Activated T-helper 1 cell treated with anti-CD3 and anti-CD28 coated beads, Interleukin-12 subunit alpha, Interleukin-12 subunit beta, Interleukin-2, Interleukin-4 antibody, amounts not matched to agents 30 ng/mL and 10 ng/mL and 1 ng/mL, durations not matched to agents 14 hours and 24 hours and 36 hours (primary cell): ENCODE measurements at regions of chr19 and their contacts with region 1.

Region 1: GRCh38 chr19:36114763-36115452 is at the start of gene POLR2I:
- DNase-seq: peak; percentile 98
- H3K4me3 Mint-ChIP-seq: peak within 1 kb of the TSS; percentile 98
- H3K27ac Mint-ChIP-seq: peak within 1 kb of the TSS; percentile 92
- H3K4me1 Mint-ChIP-seq: peaks cover 38% of the 10 kb centered on the region
- H3K27me3 Mint-ChIP-seq: peaks cover 1% of the 10 kb centered on the region
- total RNA-seq, gene POLR2I: 76.3 and 92.4 TPM in 2 replicates

Region 2: GRCh38 chr19:36014029-36014924 is 100.6 kb before region 1 on chr19 and contains the start of gene ALKBH6:
- intact Hi-C with region 1: loop called (anchors 1 kb)
- DNase-seq: peak; percentile 100
- H3K4me3 Mint-ChIP-seq: peak within 1 kb of the TSS; percentile 98
- H3K27ac Mint-ChIP-seq: peak within 1 kb of the TSS; percentile 96
- H3K4me1 Mint-ChIP-seq: peaks cover 46% of the 10 kb centered on the region
- H3K27me3 Mint-ChIP-seq: no peaks in the 10 kb centered on the region
- total RNA-seq, gene ALKBH6: 48.3 and 60.6 TPM in 2 replicates

Region 3: DNA sequence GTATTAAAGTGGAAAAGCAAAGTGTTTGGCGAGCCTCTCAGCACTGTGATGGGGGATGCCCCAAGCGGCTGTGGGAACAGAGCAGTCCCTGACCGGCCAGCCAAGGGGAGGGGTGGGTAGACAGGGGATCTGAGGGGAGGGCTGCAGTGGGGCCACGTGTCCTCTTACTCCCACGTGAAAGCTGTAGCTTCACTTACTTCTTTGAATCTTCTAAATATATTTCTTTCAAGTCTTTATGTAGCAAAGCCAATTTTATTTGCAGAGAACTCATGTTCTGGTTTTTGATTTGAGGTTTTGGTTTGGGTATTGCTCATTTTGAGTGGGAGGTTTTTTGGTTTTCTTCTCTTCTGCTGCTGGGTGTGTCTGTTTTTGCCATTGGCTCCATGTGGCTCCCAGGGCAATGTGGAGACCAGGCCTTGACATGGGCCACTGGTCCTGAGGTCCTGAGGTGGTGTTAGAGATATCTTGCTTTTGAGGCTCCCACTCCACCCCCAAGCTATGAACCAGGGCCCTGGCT is 21.7 kb before region 1 on chr19:
- intact Hi-C with region 1: loop called (anchors 1 kb)
- DNase-seq: no peak
- H3K4me3 Mint-ChIP-seq: no peak overlapping the region
- H3K27ac Mint-ChIP-seq: peak overlapping the region; percentile 78
- H3K4me1 Mint-ChIP-seq: peaks cover 15% of the 10 kb centered on the region
- H3K27me3 Mint-ChIP-seq: no peaks in the 10 kb centered on the region

Region 4: GRCh38 chr19:36139473-36140303 is 24.8 kb after region 1 on chr19 and contains the start of gene CAPNS1:
- intact Hi-C with region 1: loop called (anchors 1 kb)
- DNase-seq: peak; percentile 92
- H3K4me3 Mint-ChIP-seq: peak within 1 kb of the TSS; percentile 97
- H3K27ac Mint-ChIP-seq: peak within 1 kb of the TSS; percentile 99
- H3K4me1 Mint-ChIP-seq: peaks cover 20% of the 10 kb centered on the region
- H3K27me3 Mint-ChIP-seq: peaks cover 1% of the 10 kb centered on the region
- total RNA-seq, gene CAPNS1: 326 and 335 TPM in 2 replicates

Region 5: DNA sequence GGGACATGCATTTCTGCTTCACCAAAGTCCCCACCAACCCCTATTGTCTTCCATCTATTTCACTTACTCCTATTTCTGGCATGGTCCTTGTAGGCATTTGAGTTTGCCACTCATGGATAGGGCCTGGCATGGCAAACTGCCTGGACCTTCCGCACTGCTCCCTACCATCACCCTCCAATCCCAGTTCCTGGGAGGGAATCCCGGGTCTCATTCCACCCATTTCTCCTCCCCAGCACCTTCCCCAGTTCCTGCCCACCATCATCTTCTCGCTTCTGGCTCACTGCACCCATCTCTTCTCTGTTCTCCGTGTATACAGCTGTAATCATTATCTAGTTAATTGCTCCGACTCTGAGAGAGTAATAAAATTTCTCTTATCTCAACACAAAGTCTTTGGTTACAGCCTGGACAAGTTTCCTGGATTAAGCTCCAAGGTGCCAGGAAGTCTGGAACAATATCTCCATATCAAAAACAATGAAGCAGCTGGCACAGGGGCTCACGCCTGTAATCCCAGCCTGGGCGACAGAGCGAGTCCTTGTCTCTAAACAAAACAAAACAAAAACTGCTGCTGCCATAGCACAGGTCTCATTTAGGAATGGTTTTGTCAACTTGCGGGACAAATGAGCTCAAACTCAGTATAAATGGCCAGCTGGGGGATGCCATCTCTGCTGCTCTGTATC is 54.3 kb after region 1 on chr19:
- intact Hi-C with region 1: loop called (anchors 1 kb)
- DNase-seq: no peak
- H3K4me3 Mint-ChIP-seq: no peak overlapping the region
- H3K27ac Mint-ChIP-seq: no peak overlapping the region
- H3K4me1 Mint-ChIP-seq: no peaks in the 10 kb centered on the region
- H3K27me3 Mint-ChIP-seq: peaks cover 1% of the 10 kb centered on the region

Region 6: DNA sequence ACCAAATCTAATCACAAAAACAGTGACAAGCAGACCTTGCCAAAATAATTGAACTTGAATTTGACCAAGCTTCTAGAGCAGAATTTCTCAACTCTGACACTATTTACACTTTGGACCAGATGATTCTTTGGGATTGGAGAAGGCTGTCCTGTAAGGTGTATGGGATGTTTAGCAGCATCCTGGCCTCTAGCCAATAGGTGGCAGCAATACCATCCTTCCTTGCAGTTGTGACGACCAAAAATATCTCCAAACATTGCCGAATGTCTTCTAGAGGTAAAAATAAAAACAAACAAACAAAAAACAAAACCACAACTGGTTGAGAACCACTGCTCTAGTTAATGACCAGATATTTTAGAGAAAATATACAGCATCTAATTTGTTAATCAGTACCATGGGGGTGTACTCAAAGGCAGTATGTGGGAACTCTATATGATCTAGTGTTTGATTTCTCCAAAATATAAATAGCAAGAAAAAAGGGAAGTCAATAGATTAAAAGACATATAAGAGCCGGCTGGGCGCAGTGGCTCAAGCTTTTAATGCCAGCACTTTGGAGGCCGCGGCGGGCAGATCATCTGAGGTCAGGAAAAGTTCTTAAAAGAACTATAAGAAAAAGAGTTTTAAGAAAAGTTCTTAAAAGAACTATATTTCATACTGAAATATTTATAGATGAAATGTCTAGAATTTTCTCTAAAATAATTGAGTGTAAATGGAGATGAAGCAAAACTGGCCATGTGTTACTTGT is 1195.1 kb after region 1 on chr19:
- intact Hi-C with region 1: loop called (anchors 10 kb)
- DNase-seq: no peak
- H3K4me3 Mint-ChIP-seq: no peak overlapping the region
- H3K27ac Mint-ChIP-seq: no peak overlapping the region
- H3K4me1 Mint-ChIP-seq: peaks cover 10% of the 10 kb centered on the region
- H3K27me3 Mint-ChIP-seq: no peaks in the 10 kb centered on the region